PC-9 (cell line): ENCODE measurements at regions of chr20 and their contacts with region 1.

Region 1: GRCh38 chr20:3296261-3297078 is 57.5 kb upstream of the SLC4A11 start:
- DNase-seq: no peak
- H3K4me3 ChIP-seq: no peak overlapping the region
- H3K27ac ChIP-seq: no peak overlapping the region
- H3K4me1 ChIP-seq: no peaks in the 10 kb centered on the region
- H3K27me3 ChIP-seq: no peaks in the 10 kb centered on the region
- CTCF ChIP-seq: no peak

Region 2: GRCh38 chr20:3190681-3191111 is 105.8 kb before region 1 on chr20:
- CTCF ChIA-PET with region 1: no interaction called
- POLR2A ChIA-PET with region 1: no interaction called
- intact Hi-C with region 1: no loop called
- DNase-seq: no peak
- H3K4me3 ChIP-seq: no peak overlapping the region
- H3K27ac ChIP-seq: no peak overlapping the region
- H3K4me1 ChIP-seq: no peaks in the 10 kb centered on the region
- H3K27me3 ChIP-seq: no peaks in the 10 kb centered on the region
- CTCF ChIP-seq: no peak

Region 3: DNA sequence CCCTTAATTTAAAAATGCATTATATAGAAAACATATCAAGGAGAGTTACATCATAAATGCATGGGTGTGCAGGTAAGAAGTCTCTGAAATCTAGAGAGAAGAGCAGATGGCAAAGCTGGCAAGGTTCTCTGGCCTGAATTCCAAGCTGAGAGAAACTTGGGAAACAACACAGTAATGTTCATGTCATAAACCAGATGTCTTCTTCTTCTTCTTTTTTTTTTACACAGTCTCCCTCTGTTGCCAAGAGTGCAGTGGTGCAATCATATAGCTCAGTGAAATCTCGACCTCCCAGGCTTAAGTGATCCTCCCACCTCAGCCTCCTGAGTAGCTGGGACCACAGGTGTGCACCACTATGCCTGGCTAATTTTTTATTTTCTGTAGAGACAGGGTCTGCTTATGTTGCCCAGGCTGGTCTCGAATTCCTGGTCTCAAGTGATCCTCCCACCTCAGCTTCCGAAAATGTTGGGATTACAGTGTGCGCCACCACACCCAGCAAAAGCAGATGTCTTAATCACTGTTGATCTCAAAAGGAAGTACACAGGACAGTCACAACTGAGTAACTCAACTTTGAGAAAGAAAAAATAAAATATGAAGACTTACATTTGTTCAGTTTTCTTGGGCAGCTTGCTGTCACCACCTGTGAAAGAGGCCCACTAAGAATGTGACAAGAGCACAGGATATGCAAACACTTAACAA is 33.7 kb after region 1 on chr20:
- CTCF ChIA-PET with region 1: no interaction called
- POLR2A ChIA-PET with region 1: interaction called, 10 read pairs
- intact Hi-C with region 1: no loop called
- DNase-seq: no peak
- H3K4me3 ChIP-seq: no peak overlapping the region
- H3K27ac ChIP-seq: no peak overlapping the region
- H3K4me1 ChIP-seq: no peaks in the 10 kb centered on the region
- H3K27me3 ChIP-seq: no peaks in the 10 kb centered on the region
- CTCF ChIP-seq: no peak